Calu3 (cell line): ENCODE measurements at regions of chr2 and their contacts with region 1.

Region 1: GRCh38 chr2:88190808-88191721 is 20.9 kb downstream of the THNSL2 start:
- DNase-seq: peak; percentile 39
- H3K4me3 Mint-ChIP-seq: no peak overlapping the region
- H3K27ac Mint-ChIP-seq: no peak overlapping the region
- H3K4me1 Mint-ChIP-seq: no peaks in the 10 kb centered on the region
- H3K27me3 Mint-ChIP-seq: peaks cover 17% of the 10 kb centered on the region
- CTCF ChIP-seq: peak; percentile 59

Region 2: DNA sequence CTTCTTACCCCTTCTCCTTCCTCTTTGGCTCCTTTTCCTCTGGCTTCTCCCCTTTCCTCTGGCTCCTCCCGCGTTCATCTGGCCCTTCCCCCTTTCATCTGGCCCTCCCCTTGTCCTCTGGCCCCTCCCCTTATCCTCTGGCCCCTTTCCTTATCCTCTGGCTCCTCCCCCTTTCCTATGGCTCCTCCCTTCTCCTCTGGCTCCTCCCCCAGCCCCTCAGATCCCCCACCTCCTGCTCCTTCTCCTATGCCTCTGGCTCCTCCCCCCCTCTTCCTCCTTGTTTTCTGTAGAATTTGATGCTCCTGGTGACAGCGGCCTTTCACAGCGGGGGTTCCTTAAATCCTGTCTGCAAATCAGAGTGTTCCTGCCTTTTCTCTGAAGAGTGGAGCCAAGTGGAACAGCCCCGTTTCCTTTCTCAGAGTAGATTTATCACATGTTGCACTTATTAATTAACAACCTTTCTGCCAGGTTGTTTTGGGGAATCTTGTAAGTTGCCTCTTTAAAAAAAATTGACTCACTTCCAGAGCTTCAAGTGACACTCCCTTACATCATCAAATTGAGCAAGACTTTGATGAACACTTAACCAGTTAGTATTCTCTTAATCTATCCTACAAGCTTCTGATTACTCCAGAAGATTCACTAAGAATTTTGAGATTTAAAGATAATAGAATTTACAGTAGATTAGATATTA is 91.1 kb before region 1 on chr2:
- CTCF ChIA-PET with region 1: no interaction called
- intact Hi-C with region 1: no loop called
- DNase-seq: no peak
- H3K4me3 Mint-ChIP-seq: no peak overlapping the region
- H3K27ac Mint-ChIP-seq: no peak overlapping the region
- H3K4me1 Mint-ChIP-seq: no peaks in the 10 kb centered on the region
- H3K27me3 Mint-ChIP-seq: peaks cover 38% of the 10 kb centered on the region
- CTCF ChIP-seq: no peak

Region 3: DNA sequence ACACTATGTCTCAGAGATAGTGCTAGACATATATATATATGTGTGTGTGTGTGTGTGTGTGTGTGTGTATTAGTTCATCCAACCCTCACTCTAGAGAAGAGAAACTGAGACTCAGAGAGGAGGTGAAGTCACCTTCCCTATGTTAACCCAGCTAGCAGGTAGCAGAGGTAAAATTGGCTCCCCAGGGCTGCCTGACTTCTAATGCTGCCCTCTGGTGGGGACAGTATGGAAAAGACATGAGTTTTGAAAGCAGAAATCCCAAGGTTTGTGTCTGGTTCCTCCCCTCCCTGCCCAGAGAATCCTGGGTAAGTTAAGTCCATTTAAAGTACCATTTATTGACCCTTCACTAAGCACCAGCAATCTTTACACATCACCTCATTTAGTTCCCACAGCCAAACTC is 116.8 kb after region 1 on chr2:
- CTCF ChIA-PET with region 1: no interaction called
- intact Hi-C with region 1: loop called (anchors 1 kb)
- DNase-seq: peak; percentile 59
- H3K4me3 Mint-ChIP-seq: no peak overlapping the region
- H3K27ac Mint-ChIP-seq: no peak overlapping the region
- H3K4me1 Mint-ChIP-seq: no peaks in the 10 kb centered on the region
- H3K27me3 Mint-ChIP-seq: no peaks in the 10 kb centered on the region
- CTCF ChIP-seq: no peak

Region 4: GRCh38 chr2:88398180-88398579 is 207.1 kb after region 1 on chr2:
- CTCF ChIA-PET with region 1: no interaction called
- intact Hi-C with region 1: loop called (anchors 5 kb)
- DNase-seq: no peak
- H3K4me3 Mint-ChIP-seq: no peak overlapping the region
- H3K27ac Mint-ChIP-seq: no peak overlapping the region
- H3K4me1 Mint-ChIP-seq: no peaks in the 10 kb centered on the region
- H3K27me3 Mint-ChIP-seq: peaks cover 8% of the 10 kb centered on the region
- CTCF ChIP-seq: no peak

Region 5: GRCh38 chr2:88451811-88452565 is 260.9 kb after region 1 on chr2:
- CTCF ChIA-PET with region 1: interaction called, 5 read pairs
- intact Hi-C with region 1: loop called (anchors 2 kb)
- DNase-seq: no peak
- H3K4me3 Mint-ChIP-seq: no peak overlapping the region
- H3K27ac Mint-ChIP-seq: no peak overlapping the region
- H3K4me1 Mint-ChIP-seq: no peaks in the 10 kb centered on the region
- H3K27me3 Mint-ChIP-seq: peaks cover 17% of the 10 kb centered on the region
- CTCF ChIP-seq: no peak

Region 6: GRCh38 chr2:88489200-88489599 is 298.1 kb after region 1 on chr2:
- CTCF ChIA-PET with region 1: no interaction called
- intact Hi-C with region 1: no loop called
- DNase-seq: no peak
- H3K4me3 Mint-ChIP-seq: no peak overlapping the region
- H3K27ac Mint-ChIP-seq: no peak overlapping the region
- H3K4me1 Mint-ChIP-seq: no peaks in the 10 kb centered on the region
- H3K27me3 Mint-ChIP-seq: no peaks in the 10 kb centered on the region
- CTCF ChIP-seq: no peak

Region 7: DNA sequence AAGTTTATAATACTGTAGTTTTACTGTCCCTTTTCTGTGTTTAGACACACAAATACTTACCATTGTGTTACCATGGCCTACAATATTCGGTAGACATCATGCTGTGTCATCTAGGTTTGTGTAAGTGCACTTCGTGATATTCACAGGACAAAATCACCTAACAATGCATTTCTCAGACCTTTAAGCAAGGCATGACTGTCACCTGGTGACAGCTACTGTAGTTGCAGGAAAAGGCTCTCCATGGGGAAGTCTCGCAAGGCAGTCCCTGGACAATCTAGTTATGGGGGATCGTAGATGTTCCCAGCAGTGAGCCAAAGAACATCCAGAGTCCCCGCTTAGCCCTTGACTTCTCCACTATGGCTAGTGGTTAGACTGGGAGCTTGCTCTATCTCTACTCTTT is 363.1 kb after region 1 on chr2:
- CTCF ChIA-PET with region 1: no interaction called
- intact Hi-C with region 1: loop called (anchors 10 kb)
- DNase-seq: no peak
- H3K4me3 Mint-ChIP-seq: no peak overlapping the region
- H3K27ac Mint-ChIP-seq: no peak overlapping the region
- H3K4me1 Mint-ChIP-seq: no peaks in the 10 kb centered on the region
- H3K27me3 Mint-ChIP-seq: peaks cover 12% of the 10 kb centered on the region
- CTCF ChIP-seq: no peak